Heart right ventricle (tissue), 16 donors: ENCODE measurements at regions of chr1 and their contacts with region 1.

Region 1: DNA sequence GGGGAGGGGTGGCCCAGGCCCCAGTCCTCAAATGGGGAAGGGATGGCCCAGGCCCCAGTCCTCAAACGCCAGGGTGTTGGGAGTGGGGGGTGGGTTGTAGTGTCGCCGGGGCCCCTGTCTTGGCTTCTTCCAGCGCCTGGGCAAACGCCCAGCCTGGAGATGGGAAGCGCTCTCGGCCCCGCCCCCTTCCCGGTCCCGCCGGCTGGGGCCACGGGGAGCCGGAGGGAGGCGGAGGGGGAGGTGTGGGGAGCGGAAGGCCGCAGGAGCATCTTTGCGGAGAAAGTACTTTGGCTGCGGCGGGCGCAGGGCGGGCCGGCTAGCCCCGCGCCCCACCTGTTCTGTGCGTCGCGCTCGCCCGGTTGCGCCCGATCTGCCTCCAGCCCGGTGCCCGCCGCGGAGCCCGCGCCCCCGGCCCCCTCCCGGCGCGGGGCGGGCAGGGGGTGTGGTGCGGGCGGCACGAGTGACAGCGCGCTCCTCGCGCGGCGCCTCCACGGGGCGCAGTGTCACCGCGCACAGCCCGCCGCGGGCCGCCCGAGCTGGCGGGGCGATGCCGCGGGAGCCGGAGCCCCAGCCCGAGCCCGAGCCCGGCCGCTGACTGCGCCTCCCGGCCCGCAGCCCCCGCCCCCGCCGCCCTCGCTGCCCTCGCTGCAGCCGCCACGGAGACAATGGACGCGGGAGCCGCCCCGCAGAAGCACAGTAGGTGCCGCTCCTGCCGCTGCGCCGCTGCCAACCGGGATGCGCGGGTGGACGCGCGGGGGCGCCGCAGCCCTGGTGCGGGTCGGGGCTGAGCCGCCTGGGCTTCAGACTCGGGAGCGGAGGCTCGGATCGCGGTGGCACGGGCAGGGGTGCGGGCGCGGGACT is 31.1 kb upstream of the PEX10 start:
- DNase-seq: no peak
- ATAC-seq: no peak
- H3K4me3 ChIP-seq: no peak overlapping the region
- H3K27ac ChIP-seq: no peak overlapping the region
- H3K4me1 ChIP-seq: no peaks in the 10 kb centered on the region
- H3K27me3 ChIP-seq: peaks cover 15 to 76% (median 72%) of the 10 kb centered on the region in 7 donors
- CTCF ChIP-seq: peak in 3 of 9 donors; percentile 9 to 33 (median 23)

Region 2: GRCh38 chr1:2104621-2105513 is 338.6 kb before region 1 on chr1:
- intact Hi-C with region 1: no loop called
- DNase-seq: peak in 1 of 2 donors; percentile 10
- ATAC-seq: peak in 4 of 8 donors; percentile 11 to 38 (median 24)
- H3K4me3 ChIP-seq: no peak overlapping the region
- H3K27ac ChIP-seq: peak overlapping the region in 1 of 10 donors; percentile 53
- H3K4me1 ChIP-seq: no peaks in the 10 kb centered on the region
- H3K27me3 ChIP-seq: peaks cover 0 to 7% (median 0%) of the 10 kb centered on the region in 7 donors
- CTCF ChIP-seq: no peak

Region 3: DNA sequence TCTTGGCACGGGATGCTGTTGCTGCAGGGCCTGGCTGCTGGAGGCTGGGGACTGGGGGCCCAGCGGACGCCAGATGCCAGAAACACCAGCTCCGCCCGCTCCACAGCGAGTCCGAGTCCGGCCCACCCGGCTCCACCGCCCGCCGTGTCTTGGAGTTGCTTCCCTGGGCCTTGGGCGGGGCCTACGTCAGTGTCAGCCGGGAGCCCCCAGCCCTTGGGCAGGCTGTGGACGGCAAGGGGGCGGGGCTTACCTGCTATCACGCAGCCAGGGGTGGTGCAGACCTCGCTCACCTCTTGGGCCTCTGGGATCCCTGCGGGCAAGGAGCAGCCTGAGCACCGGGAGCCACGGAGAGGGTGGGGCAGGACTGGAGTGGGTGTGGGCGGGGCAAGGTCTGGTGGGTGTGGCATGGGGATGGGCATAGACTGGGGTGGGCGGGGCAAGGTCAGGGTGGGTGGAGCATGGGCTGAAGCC is 167.6 kb after region 1 on chr1:
- intact Hi-C with region 1: loop called in 1 of 10 experiments (anchors 10 kb)
- DNase-seq: peak in 1 of 2 donors; percentile 31
- ATAC-seq: peak in 2 of 8 donors; percentile 41 to 56
- H3K4me3 ChIP-seq: no peak overlapping the region
- H3K27ac ChIP-seq: no peak overlapping the region
- H3K4me1 ChIP-seq: peaks cover 0 to 21% (median 5%) of the 10 kb centered on the region in 9 donors
- H3K27me3 ChIP-seq: peaks cover 0 to 48% (median 11%) of the 10 kb centered on the region in 7 donors
- CTCF ChIP-seq: no peak

Region 4: DNA sequence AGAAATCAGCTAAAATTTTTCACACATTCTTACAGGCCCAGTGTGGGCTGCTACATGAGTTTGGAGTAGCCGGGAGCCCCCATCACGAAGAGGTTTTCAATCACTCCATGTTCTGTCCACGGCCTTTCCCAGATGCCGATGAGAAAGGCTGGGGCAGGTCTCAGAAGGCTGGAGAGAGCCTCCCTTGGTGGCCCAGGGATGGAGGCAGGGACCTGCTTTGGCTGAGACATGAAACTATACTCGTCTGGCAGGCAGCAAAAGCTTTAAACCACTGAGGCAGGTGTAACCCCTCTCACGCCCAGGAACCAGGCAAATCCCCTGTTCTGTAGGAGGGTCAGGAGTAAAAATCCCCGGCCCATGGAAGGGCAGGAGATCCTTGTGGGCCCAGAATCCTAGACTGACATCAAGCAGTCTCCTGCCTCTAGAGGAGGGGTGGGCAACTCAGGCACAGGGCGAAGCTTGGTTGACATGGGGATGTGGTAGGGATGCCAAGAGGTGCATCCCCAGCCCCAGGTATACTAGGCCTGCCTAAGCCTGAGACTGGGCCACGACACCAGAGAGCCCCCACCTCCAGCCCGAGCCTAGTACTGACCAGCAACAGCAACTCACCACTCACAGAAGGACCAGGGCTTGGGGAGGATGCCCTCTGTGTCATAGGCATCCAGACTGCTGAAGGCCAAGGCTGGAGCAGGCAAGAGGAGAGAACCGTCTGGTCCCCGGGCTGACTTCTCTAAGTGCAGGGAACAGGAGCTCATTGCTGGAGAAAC is 180.2 kb after region 1 on chr1:
- intact Hi-C with region 1: loop called in 2 of 10 experiments (anchors 5 to 10 kb)
- DNase-seq: no peak
- ATAC-seq: no peak
- H3K4me3 ChIP-seq: no peak overlapping the region
- H3K27ac ChIP-seq: no peak overlapping the region
- H3K4me1 ChIP-seq: peaks cover 0 to 6% (median 0%) of the 10 kb centered on the region in 9 donors
- H3K27me3 ChIP-seq: peaks cover 11 to 56% (median 48%) of the 10 kb centered on the region in 7 donors
- CTCF ChIP-seq: no peak